ENCODE measurements at regions of chr3 and their contacts with region 1.

Region 1: GRCh38 chr3:182713743-182714517 is 79.4 kb upstream of the ATP11B start:
- DNase-seq: peak in 4 of 14 experiments; percentile 10 to 62 (median 54)
- ATAC-seq: peak; percentile 59
- H3K4me3 ChIP-seq: no peak overlapping the region
- H3K4me3 Mint-ChIP-seq: no peak overlapping the region
- H3K27ac ChIP-seq: no peak overlapping the region
- H3K27ac Mint-ChIP-seq: no peak overlapping the region
- H3K4me1 ChIP-seq: no peaks in the 10 kb centered on the region
- H3K4me1 Mint-ChIP-seq: no peaks in the 10 kb centered on the region
- H3K27me3 ChIP-seq: no peaks in the 10 kb centered on the region
- H3K27me3 Mint-ChIP-seq: no peaks in the 10 kb centered on the region
- CTCF ChIP-seq: peak; percentile 72

Region 2: DNA sequence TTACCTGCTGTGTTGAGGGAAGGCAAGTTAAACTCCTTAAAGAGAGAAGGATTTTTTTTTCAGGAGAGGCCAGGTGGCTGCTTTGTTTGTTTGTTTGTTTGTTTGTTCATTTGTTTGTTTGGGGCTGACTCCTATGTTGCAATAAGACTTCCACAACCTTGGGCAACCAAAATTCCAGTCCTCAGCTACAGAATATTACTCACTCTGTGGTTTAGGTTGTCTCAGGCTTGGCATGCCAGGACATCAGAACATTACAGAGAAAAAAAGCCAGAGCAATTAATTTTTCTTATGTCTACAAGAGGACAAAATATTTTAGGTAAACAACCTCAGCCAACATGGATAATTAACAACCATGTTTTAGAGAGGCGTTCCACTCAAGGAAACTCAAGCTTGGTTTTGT is 77.3 kb before region 1 on chr3:
- CTCF ChIA-PET with region 1: no interaction called
- POLR2A ChIA-PET with region 1: no interaction called
- intact Hi-C with region 1: no loop called
- DNase-seq: no peak
- ATAC-seq: no peak
- H3K4me3 ChIP-seq: no peak overlapping the region
- H3K4me3 Mint-ChIP-seq: no peak overlapping the region
- H3K27ac ChIP-seq: no peak overlapping the region
- H3K27ac Mint-ChIP-seq: no peak overlapping the region
- H3K4me1 ChIP-seq: no peaks in the 10 kb centered on the region
- H3K4me1 Mint-ChIP-seq: no peaks in the 10 kb centered on the region
- H3K27me3 ChIP-seq: peaks cover 0 to 7% of the 10 kb centered on the region in 2 experiments
- H3K27me3 Mint-ChIP-seq: peaks cover 18% of the 10 kb centered on the region
- CTCF ChIP-seq: no peak

Region 3: GRCh38 chr3:182837855-182838454 is 124.0 kb after region 1 on chr3:
- CTCF ChIA-PET with region 1: interaction called, 11 read pairs
- POLR2A ChIA-PET with region 1: interaction called, 3 read pairs
- intact Hi-C with region 1: loop called (anchors 1 kb)
- DNase-seq: peak in 3 of 14 experiments; percentile 42 to 50 (median 46)
- ATAC-seq: no peak
- H3K4me3 ChIP-seq: no peak overlapping the region
- H3K4me3 Mint-ChIP-seq: no peak overlapping the region
- H3K27ac ChIP-seq: no peak overlapping the region
- H3K27ac Mint-ChIP-seq: no peak overlapping the region
- H3K4me1 ChIP-seq: no peaks in the 10 kb centered on the region
- H3K4me1 Mint-ChIP-seq: peaks cover 22% of the 10 kb centered on the region
- H3K27me3 ChIP-seq: no peaks in the 10 kb centered on the region
- H3K27me3 Mint-ChIP-seq: no peaks in the 10 kb centered on the region
- CTCF ChIP-seq: peak; percentile 66

Region 4: GRCh38 chr3:183122257-183122932 is 408.5 kb after region 1 on chr3:
- CTCF ChIA-PET with region 1: no interaction called
- POLR2A ChIA-PET with region 1: no interaction called
- intact Hi-C with region 1: loop called in 1 of 2 experiments (anchors 2 kb)
- DNase-seq: peak in 4 of 14 experiments; percentile 14 to 73 (median 64)
- ATAC-seq: peak; percentile 73
- H3K4me3 ChIP-seq: no peak overlapping the region
- H3K4me3 Mint-ChIP-seq: no peak overlapping the region
- H3K27ac ChIP-seq: no peak overlapping the region
- H3K27ac Mint-ChIP-seq: no peak overlapping the region
- H3K4me1 ChIP-seq: no peaks in the 10 kb centered on the region
- H3K4me1 Mint-ChIP-seq: no peaks in the 10 kb centered on the region
- H3K27me3 ChIP-seq: no peaks in the 10 kb centered on the region
- H3K27me3 Mint-ChIP-seq: peaks cover 4% of the 10 kb centered on the region
- CTCF ChIP-seq: peak; percentile 92